ENCODE measurements at regions of chr6 and their contacts with region 1.

Region 1: DNA sequence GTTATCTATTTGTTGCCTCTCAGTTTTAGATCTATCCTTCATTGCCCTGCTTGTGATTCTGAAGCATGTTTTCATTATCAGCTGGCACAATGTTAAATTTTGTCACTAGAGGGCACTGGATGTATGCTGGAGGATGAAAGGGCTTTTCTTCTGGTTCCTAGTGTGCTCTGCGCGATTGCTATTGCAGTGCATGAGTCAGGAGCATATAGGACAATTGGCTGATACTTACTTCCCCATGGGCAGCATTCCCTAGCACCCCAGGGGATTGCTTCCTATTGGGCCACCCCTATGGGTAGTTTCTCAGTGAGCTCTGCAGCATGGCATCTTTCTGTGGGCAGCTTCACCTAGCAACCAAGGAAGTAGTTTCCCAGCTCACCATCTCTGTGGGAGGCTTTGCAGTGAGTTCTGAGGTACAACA is 280.3 kb upstream of the SYNCRIP start:
- DNase-seq: peak; percentile 53
- H3K4me3 Mint-ChIP-seq: no peak overlapping the region
- H3K27ac Mint-ChIP-seq: no peak overlapping the region
- H3K4me1 Mint-ChIP-seq: no peaks in the 10 kb centered on the region
- H3K27me3 Mint-ChIP-seq: peaks cover 38% of the 10 kb centered on the region
- CTCF ChIP-seq: peak; percentile 67

Region 2: DNA sequence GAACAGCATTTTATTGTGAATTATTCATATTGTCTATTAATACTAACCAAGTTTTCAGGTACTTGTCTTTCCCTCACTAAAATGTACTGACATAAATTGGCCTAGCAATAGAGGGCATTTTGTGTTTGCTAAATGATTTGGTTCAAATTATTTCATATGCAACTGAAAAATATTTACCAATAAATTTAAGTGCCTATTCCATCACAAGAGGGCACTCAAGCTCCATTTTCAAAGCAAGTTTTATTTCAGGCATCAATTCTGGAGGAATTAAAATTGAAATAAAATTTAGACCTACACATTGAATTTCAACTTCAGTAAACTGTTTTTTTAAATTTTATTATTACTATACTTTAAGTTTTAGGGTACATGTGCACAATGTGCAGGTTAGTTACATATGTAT is 166.0 kb before region 1 on chr6:
- CTCF ChIA-PET with region 1: no interaction called
- intact Hi-C with region 1: loop called (anchors 5 kb)
- DNase-seq: no peak
- H3K4me3 Mint-ChIP-seq: no peak overlapping the region
- H3K27ac Mint-ChIP-seq: no peak overlapping the region
- H3K4me1 Mint-ChIP-seq: peaks cover 7% of the 10 kb centered on the region
- H3K27me3 Mint-ChIP-seq: peaks cover 23% of the 10 kb centered on the region
- CTCF ChIP-seq: peak; percentile 39

Region 3: DNA sequence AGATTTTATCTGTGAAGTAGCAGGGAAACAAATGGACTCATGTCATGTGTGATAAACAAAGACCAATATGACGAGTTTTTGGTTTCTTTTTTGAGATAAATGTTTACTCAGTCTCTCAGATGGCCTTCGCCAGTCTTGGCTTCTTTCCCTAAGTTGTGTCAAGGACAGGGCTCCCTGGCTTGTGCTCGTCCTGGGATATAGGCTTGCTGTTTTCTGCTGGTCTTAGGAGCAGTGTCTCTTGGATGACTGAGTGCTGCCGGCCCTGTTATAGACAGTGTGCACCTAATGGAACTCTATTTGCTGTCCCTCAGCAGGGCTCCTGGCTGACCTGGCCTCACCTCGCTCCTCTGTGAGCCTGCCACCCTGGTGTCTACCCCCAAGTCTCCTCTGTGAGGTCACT is 43.8 kb after region 1 on chr6:
- CTCF ChIA-PET with region 1: no interaction called
- intact Hi-C with region 1: no loop called
- DNase-seq: no peak
- H3K4me3 Mint-ChIP-seq: no peak overlapping the region
- H3K27ac Mint-ChIP-seq: no peak overlapping the region
- H3K4me1 Mint-ChIP-seq: no peaks in the 10 kb centered on the region
- H3K27me3 Mint-ChIP-seq: no peaks in the 10 kb centered on the region
- CTCF ChIP-seq: no peak

Region 4: GRCh38 chr6:86192123-86192522 is 269.1 kb after region 1 on chr6:
- CTCF ChIA-PET with region 1: no interaction called
- intact Hi-C with region 1: loop called (anchors 5 kb)
- DNase-seq: peak; percentile 33
- H3K4me3 Mint-ChIP-seq: no peak overlapping the region
- H3K27ac Mint-ChIP-seq: no peak overlapping the region
- H3K4me1 Mint-ChIP-seq: no peaks in the 10 kb centered on the region
- H3K27me3 Mint-ChIP-seq: peaks cover 24% of the 10 kb centered on the region
- CTCF ChIP-seq: peak; percentile 46

Region 5: GRCh38 chr6:86856937-86857563 is 934.0 kb after region 1 on chr6:
- CTCF ChIA-PET with region 1: interaction called, 4 read pairs
- intact Hi-C with region 1: loop called (anchors 5 kb)
- DNase-seq: peak; percentile 67
- H3K4me3 Mint-ChIP-seq: no peak overlapping the region
- H3K27ac Mint-ChIP-seq: no peak overlapping the region
- H3K4me1 Mint-ChIP-seq: no peaks in the 10 kb centered on the region
- H3K27me3 Mint-ChIP-seq: no peaks in the 10 kb centered on the region
- CTCF ChIP-seq: peak; percentile 67

Region 6: DNA sequence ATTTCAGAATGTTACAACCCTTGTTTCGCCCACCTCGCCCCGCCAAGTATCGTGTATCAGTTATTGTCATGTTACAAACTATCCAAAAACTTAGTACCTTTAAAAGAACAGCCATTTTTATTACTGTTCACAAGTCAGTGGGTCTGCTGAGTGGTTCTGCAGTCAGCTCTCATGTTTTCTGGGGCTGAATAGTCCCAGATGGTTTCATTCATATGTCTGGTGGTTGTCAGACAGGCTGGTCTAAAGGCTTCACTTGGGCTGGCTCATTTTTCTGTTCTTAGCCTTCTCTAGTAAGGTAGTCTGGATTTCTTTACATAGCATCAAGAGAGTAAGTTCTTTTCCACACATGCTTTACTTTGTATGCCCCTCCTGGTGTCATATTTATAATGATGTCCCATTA is 1241.0 kb after region 1 on chr6:
- CTCF ChIA-PET with region 1: no interaction called
- intact Hi-C with region 1: no loop called
- DNase-seq: no peak
- H3K4me3 Mint-ChIP-seq: no peak overlapping the region
- H3K27ac Mint-ChIP-seq: no peak overlapping the region
- H3K4me1 Mint-ChIP-seq: peaks cover 40% of the 10 kb centered on the region
- H3K27me3 Mint-ChIP-seq: no peaks in the 10 kb centered on the region
- CTCF ChIP-seq: no peak

Measured in Calu3 (cell line).